ENCODE measurements at regions of chr3 and their contacts with region 1.

Region 1: GRCh38 chr3:49454458-49454857 is 15.6 kb upstream of the DAG1 start:
- DNase-seq: peak; percentile 75
- H3K4me3 ChIP-seq: no peak overlapping the region
- H3K27ac ChIP-seq: no peak overlapping the region
- H3K4me1 ChIP-seq: peaks cover 24% of the 10 kb centered on the region
- H3K27me3 ChIP-seq: no peaks in the 10 kb centered on the region
- CTCF ChIP-seq: peak; percentile 51; the same call in 1 of the 2 replicates

Region 2: DNA sequence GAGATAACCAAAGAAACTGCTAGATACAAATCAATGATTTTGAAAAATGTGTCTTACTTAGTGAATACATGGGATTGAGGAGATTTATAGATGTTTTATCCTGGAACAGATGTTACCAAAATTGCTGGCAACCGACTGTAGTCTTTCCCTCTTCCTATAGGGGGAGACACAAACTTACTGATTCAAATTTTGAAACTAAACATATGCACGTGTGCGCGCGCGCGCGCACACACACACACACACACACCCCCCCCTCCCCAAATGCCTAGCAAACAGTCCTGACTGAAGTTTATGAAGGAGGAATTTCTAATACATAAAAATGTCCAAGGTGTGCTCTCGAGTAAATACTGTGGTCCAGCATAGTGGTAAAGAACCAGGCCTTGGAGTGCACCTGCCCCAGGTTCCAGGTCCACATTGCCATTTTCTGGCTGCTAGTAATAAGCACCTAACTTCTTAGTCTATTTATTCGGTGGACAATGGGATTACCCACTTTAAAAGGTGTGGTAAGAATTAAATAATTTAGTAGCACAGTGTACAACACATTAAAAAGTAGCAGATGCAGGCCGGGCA is 158.9 kb before region 1 on chr3:
- CTCF ChIA-PET with region 1: no interaction called
- POLR2A ChIA-PET with region 1: no interaction called
- intact Hi-C with region 1: loop called (anchors 1 kb)
- DNase-seq: peak in 1 of 2 experiments; percentile 36
- H3K4me3 ChIP-seq: no peak overlapping the region
- H3K27ac ChIP-seq: no peak overlapping the region
- H3K4me1 ChIP-seq: no peaks in the 10 kb centered on the region
- H3K27me3 ChIP-seq: no peaks in the 10 kb centered on the region
- CTCF ChIP-seq: peak; percentile 72

Region 3: GRCh38 chr3:49411968-49412631 is 42.4 kb before region 1 on chr3 and contains the starts of genes RHOA and TCTA:
- CTCF ChIA-PET with region 1: interaction called, 12 read pairs
- POLR2A ChIA-PET with region 1: interaction called, 4 read pairs
- intact Hi-C with region 1: loop called (anchors 1 kb)
- DNase-seq: peak; percentile 97
- H3K4me3 ChIP-seq: peak within 1 kb of the TSS; percentile 89
- H3K27ac ChIP-seq: peak within 1 kb of the TSS; percentile 63
- H3K4me1 ChIP-seq: peaks cover 36% of the 10 kb centered on the region
- H3K27me3 ChIP-seq: no peaks in the 10 kb centered on the region
- CTCF ChIP-seq: no peak
- total RNA-seq, gene RHOA: 413 and 416 TPM in 2 replicates
- total RNA-seq, gene TCTA: 17.0 and 17.2 TPM in 2 replicates

Region 4: GRCh38 chr3:49519296-49519695 is 64.8 kb after region 1 on chr3:
- CTCF ChIA-PET with region 1: no interaction called
- POLR2A ChIA-PET with region 1: no interaction called
- intact Hi-C with region 1: no loop called
- DNase-seq: no peak
- H3K4me3 ChIP-seq: no peak overlapping the region
- H3K27ac ChIP-seq: no peak overlapping the region
- H3K4me1 ChIP-seq: no peaks in the 10 kb centered on the region
- H3K27me3 ChIP-seq: no peaks in the 10 kb centered on the region
- CTCF ChIP-seq: no peak

Region 5: DNA sequence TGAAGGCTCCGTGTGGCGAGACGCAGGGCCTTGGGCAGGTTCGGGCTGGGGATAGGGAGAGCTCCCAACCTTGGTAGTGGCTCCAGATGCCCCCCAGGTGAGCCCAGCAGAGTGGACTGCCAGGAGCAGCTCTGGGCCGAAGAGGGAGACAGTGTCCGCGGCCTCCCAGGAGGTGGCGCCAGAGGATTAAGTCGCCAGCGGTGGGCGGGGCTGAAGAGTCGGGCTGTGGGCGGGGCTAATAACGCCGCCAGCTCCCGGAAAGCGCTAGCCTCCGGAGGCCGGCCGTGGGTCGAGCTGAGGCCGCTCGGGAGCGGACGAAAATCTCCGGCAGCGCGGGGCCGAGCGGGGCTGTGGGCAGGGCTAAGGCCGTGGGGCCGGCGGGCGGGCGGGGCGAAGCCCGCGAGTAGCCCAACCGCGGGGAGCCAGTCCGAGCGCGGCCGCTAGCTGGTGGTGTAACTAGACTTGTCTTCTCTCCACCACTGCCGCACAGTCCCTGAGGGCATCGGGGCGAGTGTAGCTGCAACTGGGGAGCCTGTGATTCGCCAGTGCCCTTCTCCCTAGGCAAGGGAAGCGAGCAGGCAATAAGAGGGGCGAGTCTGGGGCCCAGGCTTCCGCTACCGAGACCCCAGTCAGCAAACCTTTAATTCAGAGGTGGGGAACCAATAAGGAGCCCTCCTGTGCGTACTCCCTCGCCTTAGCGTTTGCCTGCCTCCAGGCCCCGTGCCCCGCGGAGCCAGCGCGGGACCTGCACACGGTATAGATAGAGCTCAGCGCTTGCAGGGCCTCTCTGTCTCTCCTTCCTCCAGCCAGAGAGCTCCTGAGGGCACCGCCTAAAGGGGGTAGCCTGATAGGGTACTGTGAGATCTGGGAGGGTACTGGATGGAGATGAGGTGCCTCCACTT is 85.5 kb after region 1 on chr3:
- CTCF ChIA-PET with region 1: interaction called, 9 read pairs
- POLR2A ChIA-PET with region 1: interaction called, 3 read pairs
- intact Hi-C with region 1: loop called (anchors 1 kb)
- DNase-seq: peak; percentile 75 to 96
- H3K4me3 ChIP-seq: peak overlapping the region; percentile 54; the same call in 1 of the 2 replicates
- H3K27ac ChIP-seq: no peak overlapping the region
- H3K4me1 ChIP-seq: no peaks in the 10 kb centered on the region
- H3K27me3 ChIP-seq: peaks cover 23% of the 10 kb centered on the region; the same call in 1 of the 2 replicates
- CTCF ChIP-seq: peak; percentile 89

Region 6: GRCh38 chr3:49839193-49839809 is 384.8 kb after region 1 on chr3:
- CTCF ChIA-PET with region 1: interaction called, 7 read pairs
- POLR2A ChIA-PET with region 1: no interaction called
- intact Hi-C with region 1: loop called (anchors 1 kb)
- DNase-seq: peak in 1 of 2 experiments; percentile 59
- H3K4me3 ChIP-seq: no peak overlapping the region
- H3K27ac ChIP-seq: no peak overlapping the region
- H3K4me1 ChIP-seq: no peaks in the 10 kb centered on the region
- H3K27me3 ChIP-seq: no peaks in the 10 kb centered on the region
- CTCF ChIP-seq: peak; percentile 80

Measured in PC-9 (cell line).